HAP-1 (cell line): ENCODE measurements at regions of chr14 and their contacts with region 1.

Region 1: GRCh38 chr14:37595693-37596637 is 536 bp downstream of the TTC6 start:
- DNase-seq: peak; percentile 83 to 91
- H3K4me3 ChIP-seq: peak overlapping the region; percentile 61
- H3K4me1 ChIP-seq: peaks cover 30% of the 10 kb centered on the region
- H3K27me3 ChIP-seq: no peaks in the 10 kb centered on the region

Region 2: GRCh38 chr14:37650021-37650715 is 54.2 kb after region 1 on chr14:
- in situ Hi-C with region 1: loop called (anchors 5 kb)
- DNase-seq: peak in 1 of 2 experiments; percentile 68
- H3K4me3 ChIP-seq: no peak overlapping the region
- H3K4me1 ChIP-seq: peaks cover 32% of the 10 kb centered on the region
- H3K27me3 ChIP-seq: no peaks in the 10 kb centered on the region

Region 3: GRCh38 chr14:37721976-37722659 is 126.2 kb after region 1 on chr14:
- in situ Hi-C with region 1: no loop called
- DNase-seq: no peak
- H3K4me3 ChIP-seq: no peak overlapping the region
- H3K4me1 ChIP-seq: no peaks in the 10 kb centered on the region
- H3K27me3 ChIP-seq: no peaks in the 10 kb centered on the region

Region 4: GRCh38 chr14:37864861-37865718 is 269.1 kb after region 1 on chr14:
- in situ Hi-C with region 1: loop called (anchors 5 kb)
- DNase-seq: no peak
- H3K4me3 ChIP-seq: no peak overlapping the region
- H3K4me1 ChIP-seq: peaks cover 8% of the 10 kb centered on the region; the same call in 1 of the 2 replicates
- H3K27me3 ChIP-seq: no peaks in the 10 kb centered on the region

Region 5: GRCh38 chr14:38158468-38158867 is 562.5 kb after region 1 on chr14:
- in situ Hi-C with region 1: no loop called
- DNase-seq: no peak
- H3K4me3 ChIP-seq: no peak overlapping the region
- H3K4me1 ChIP-seq: no peaks in the 10 kb centered on the region
- H3K27me3 ChIP-seq: no peaks in the 10 kb centered on the region

Region 6: DNA sequence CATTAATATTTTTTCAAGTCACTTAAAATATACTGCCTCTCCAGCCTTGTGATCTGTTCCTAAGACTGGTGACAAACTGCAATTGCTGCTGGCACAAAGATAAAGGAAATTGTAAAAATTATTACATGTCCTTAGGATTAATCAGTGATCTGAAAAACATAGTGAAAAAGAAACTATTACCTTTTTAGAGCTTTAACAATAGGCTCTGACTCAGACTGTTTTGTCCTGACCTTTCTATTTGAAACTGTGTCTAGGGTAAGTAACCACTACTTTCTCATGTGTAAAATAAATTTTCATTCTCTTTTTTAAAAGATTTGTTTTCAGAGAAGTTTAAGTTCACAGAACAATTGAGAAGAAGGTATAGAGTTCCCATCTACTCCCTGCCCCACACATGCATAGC is 740.3 kb after region 1 on chr14:
- in situ Hi-C with region 1: no loop called
- DNase-seq: no peak
- H3K4me3 ChIP-seq: no peak overlapping the region
- H3K4me1 ChIP-seq: no peaks in the 10 kb centered on the region
- H3K27me3 ChIP-seq: no peaks in the 10 kb centered on the region